Breast epithelium (tissue), 4 donors: ENCODE measurements at regions of chr17 and their contacts with region 1.

Region 1: DNA sequence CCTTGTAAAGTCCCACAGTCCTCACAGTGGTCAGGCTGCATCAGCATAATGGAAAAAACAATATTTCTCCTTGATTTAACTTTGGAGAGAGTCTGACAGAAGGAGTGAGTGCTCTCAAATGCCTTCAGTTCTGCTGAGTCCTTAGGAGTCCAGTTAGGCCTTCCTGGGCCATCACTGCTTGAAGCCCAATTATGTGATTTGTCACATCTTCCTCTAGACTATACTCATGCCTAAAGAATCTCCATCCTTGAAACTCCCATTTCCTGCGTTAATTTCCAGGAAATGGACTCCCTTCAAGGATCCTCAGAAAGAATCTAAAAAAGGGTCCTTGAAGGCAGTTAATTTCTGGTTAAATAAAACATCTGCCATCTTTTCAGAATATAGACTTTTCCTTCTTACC is 52.8 kb downstream of the SLFN5 start:
- DNase-seq: no peak
- H3K4me3 ChIP-seq: no peak overlapping the region
- H3K27ac ChIP-seq: no peak overlapping the region
- H3K4me1 ChIP-seq: peaks cover 0 to 5% of the 10 kb centered on the region in 2 donors
- H3K27me3 ChIP-seq: no peaks in the 10 kb centered on the region
- CTCF ChIP-seq: no peak
- POLR2A ChIP-seq: no peak

Region 2: GRCh38 chr17:35265566-35266141 is 30.0 kb before region 1 on chr17:
- intact Hi-C with region 1: no loop called
- DNase-seq: no peak
- H3K4me3 ChIP-seq: no peak overlapping the region
- H3K27ac ChIP-seq: no peak overlapping the region
- H3K4me1 ChIP-seq: no peaks in the 10 kb centered on the region
- H3K27me3 ChIP-seq: no peaks in the 10 kb centered on the region
- CTCF ChIP-seq: no peak
- POLR2A ChIP-seq: no peak

Region 3: GRCh38 chr17:35476283-35476820 is 180.7 kb after region 1 on chr17:
- intact Hi-C with region 1: loop called (anchors 2 kb)
- DNase-seq: no peak
- H3K4me3 ChIP-seq: no peak overlapping the region
- H3K27ac ChIP-seq: no peak overlapping the region
- H3K4me1 ChIP-seq: no peaks in the 10 kb centered on the region
- H3K27me3 ChIP-seq: no peaks in the 10 kb centered on the region
- CTCF ChIP-seq: no peak
- POLR2A ChIP-seq: no peak